ENCODE measurements at regions of chr3 and their contacts with region 1.

Region 1: GRCh38 chr3:127822698-127823425 is 547 bp upstream of the MGLL start:
- H3K4me3 Mint-ChIP-seq: peak overlapping the region; percentile 98
- H3K27ac Mint-ChIP-seq: peak overlapping the region; percentile 88
- H3K4me1 Mint-ChIP-seq: peaks cover 43% of the 10 kb centered on the region
- H3K27me3 Mint-ChIP-seq: peaks cover 28% of the 10 kb centered on the region

Region 2: GRCh38 chr3:127473244-127474024 is 349.4 kb before region 1 on chr3:
- intact Hi-C with region 1: no loop called
- H3K4me3 Mint-ChIP-seq: no peak overlapping the region
- H3K27ac Mint-ChIP-seq: no peak overlapping the region
- H3K4me1 Mint-ChIP-seq: peaks cover 5% of the 10 kb centered on the region
- H3K27me3 Mint-ChIP-seq: peaks cover 11% of the 10 kb centered on the region

Region 3: DNA sequence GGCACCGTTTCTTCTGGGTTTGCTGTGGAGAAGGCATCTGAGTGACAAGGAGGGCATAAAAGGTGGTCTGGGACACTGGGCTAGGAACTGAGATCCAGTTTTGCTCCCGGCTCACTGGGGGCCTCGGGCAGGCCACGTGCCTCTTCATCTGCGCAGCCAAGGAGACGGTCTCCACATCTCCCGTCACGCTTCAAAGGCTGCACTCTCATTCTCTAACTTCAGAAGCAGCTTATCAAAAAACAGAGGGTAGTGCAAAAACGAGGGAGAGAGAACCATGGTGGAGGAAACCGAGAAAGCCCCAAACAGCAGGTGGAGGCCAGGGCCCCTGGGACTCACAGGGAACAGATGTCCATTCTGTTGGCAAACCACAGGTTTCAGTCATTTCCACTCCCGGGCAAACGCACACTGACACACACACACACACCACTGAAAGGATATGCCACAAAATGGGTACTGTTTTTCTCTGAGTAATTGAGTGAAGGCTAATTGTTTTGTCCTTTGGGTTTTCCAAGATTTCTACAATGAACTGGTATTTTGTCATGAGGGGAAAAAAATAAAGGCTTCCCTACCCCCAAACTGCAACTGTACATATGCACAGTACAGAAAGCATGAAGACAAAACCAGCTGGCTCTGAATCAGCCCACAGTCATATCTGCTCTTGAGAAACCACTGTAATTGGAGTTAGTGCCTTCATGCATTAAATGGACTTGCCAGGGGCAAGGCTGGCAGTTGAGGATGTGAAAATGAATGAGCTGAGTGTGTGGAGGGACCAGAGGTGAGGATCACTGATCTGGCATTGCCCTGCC is 72.4 kb before region 1 on chr3:
- intact Hi-C with region 1: loop called (anchors 10 kb)
- H3K4me3 Mint-ChIP-seq: no peak overlapping the region
- H3K27ac Mint-ChIP-seq: peak overlapping the region; percentile 57
- H3K4me1 Mint-ChIP-seq: peaks cover 79% of the 10 kb centered on the region
- H3K27me3 Mint-ChIP-seq: peaks cover 49% of the 10 kb centered on the region

Region 4: DNA sequence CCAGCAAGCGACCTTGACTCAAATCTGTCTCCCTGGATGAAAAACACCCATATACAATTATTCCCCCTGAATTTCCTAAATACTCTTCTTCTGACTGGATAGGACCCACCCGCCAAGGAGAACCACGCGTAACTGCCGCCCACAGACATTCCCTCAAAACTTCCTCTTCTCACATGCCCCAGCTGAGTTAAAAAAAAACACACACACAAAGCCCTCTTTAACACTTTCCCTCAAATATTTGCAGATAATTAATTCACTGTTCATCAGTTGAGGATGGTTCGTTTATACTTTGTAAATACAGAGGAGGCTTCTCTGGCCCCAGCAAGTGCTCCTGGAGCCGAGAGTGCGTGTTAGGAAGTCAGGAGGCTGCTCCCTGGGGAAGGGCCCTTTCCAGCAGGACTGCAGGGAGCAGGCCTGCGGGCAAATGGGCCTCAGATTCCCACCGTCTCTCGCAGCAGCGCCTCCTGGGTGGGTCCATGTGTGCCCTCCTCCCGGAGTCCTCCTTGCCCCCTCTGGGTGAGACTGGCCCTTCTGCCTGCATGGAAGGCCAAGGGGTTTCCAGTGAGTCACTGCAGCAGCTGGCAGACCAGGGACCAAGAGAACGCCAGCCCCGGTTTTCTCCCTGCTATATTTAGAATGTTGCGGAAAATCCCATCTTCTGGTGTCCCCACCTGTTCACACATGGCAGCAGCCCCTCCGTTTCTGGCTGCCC is 47.3 kb before region 1 on chr3:
- intact Hi-C with region 1: loop called (anchors 5 kb)
- H3K4me3 Mint-ChIP-seq: no peak overlapping the region
- H3K27ac Mint-ChIP-seq: peak overlapping the region; percentile 68
- H3K4me1 Mint-ChIP-seq: peaks cover 81% of the 10 kb centered on the region
- H3K27me3 Mint-ChIP-seq: peaks cover 15% of the 10 kb centered on the region

Region 5: GRCh38 chr3:127929824-127930413 is 107.1 kb after region 1 on chr3:
- intact Hi-C with region 1: no loop called
- H3K4me3 Mint-ChIP-seq: no peak overlapping the region
- H3K27ac Mint-ChIP-seq: no peak overlapping the region
- H3K4me1 Mint-ChIP-seq: peaks cover 13% of the 10 kb centered on the region
- H3K27me3 Mint-ChIP-seq: peaks cover 9% of the 10 kb centered on the region

Measured in dendritic cell treated with granulocyte-macrophage colony-stimulating factor and Interleukin-4, amounts not matched to agents 40 ng/mL and 50 ng/mL, for 4 days (primary cell).